ENCODE measurements at regions of chr12 and their contacts with region 1.

Region 1: GRCh38 chr12:49366652-49367380 is 446 bp upstream of the SPATS2 start:
- DNase-seq: peak; percentile 97
- H3K4me3 ChIP-seq: peak overlapping the region; percentile 72 to 88 (median 82)
- H3K27ac ChIP-seq: peak overlapping the region; percentile 92 to 97 (median 96)
- H3K4me1 ChIP-seq: peaks cover 27 to 34% (median 29%) of the 10 kb centered on the region in 4 donors
- H3K27me3 ChIP-seq: no peaks in the 10 kb centered on the region
- CTCF ChIP-seq: peak; percentile 21 to 48 (median 23)
- EP300 ChIP-seq: no peak
- POLR2A ChIP-seq: no peak

Region 2: GRCh38 chr12:48988030-48988649 is 378.7 kb before region 1 on chr12:
- intact Hi-C with region 1: no loop called
- DNase-seq: no peak
- H3K4me3 ChIP-seq: no peak overlapping the region
- H3K27ac ChIP-seq: no peak overlapping the region
- H3K4me1 ChIP-seq: peaks cover 0 to 7% (median 3%) of the 10 kb centered on the region in 4 donors
- H3K27me3 ChIP-seq: peaks cover 0 to 94% (median 8%) of the 10 kb centered on the region in 4 donors
- CTCF ChIP-seq: peak; percentile 73 to 82 (median 76)
- EP300 ChIP-seq: no peak
- POLR2A ChIP-seq: no peak

Region 3: GRCh38 chr12:49515266-49515665 is 148.4 kb after region 1 on chr12:
- intact Hi-C with region 1: no loop called
- DNase-seq: peak; percentile 12
- H3K4me3 ChIP-seq: no peak overlapping the region
- H3K27ac ChIP-seq: no peak overlapping the region
- H3K4me1 ChIP-seq: peaks cover 0 to 5% (median 0%) of the 10 kb centered on the region in 4 donors
- H3K27me3 ChIP-seq: no peaks in the 10 kb centered on the region
- CTCF ChIP-seq: no peak
- EP300 ChIP-seq: no peak
- POLR2A ChIP-seq: no peak

Region 4: DNA sequence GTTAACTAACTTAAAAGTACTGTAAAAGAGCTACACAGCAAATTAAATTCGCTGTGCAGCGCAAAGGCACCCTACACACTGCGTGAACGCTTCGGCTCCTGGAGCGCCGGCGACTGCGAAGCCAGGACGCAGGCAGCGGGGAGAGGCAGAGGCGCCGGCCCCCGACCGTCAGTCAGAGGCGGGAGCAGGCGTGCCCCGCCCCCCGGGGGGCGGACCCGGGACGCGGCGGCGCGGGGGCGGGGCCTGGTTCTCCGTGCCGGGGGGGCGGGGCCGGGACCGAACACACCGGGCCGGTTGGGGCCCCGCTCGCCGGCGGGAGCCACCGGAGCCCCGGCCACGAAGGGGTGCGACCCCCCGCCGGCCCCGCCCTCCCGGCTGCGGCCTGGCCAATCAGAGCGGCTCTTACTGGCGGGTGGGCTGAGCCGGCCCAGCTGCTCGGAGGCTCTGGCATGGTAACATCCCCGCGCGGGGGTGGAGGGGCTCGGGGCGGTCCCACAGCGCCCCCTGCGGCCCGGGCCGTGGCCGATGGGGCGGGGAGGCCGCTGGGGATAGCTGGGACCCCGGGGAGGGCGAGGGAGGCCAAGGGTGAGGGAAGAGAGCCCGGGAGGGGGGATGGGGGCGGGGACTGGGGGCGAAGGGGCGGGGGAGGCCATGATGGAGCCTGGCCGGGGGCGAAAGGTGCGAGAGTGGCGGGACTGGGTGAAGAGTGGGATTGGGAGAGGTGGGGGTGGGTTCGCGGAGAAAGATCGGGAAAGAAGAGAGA is 256.5 kb after region 1 on chr12 and contains the start of gene PRPF40B:
- intact Hi-C with region 1: loop called (anchors 10 kb)
- DNase-seq: no peak
- H3K4me3 ChIP-seq: peak within 1 kb of the TSS; percentile 62 to 77 (median 64)
- H3K27ac ChIP-seq: peak within 1 kb of the TSS; percentile 86 to 92 (median 88)
- H3K4me1 ChIP-seq: peaks cover 14 to 50% (median 38%) of the 10 kb centered on the region in 4 donors
- H3K27me3 ChIP-seq: no peaks in the 10 kb centered on the region
- CTCF ChIP-seq: peak; percentile 47 to 62 (median 57)
- EP300 ChIP-seq: no peak
- POLR2A ChIP-seq: peak; percentile 49
- total RNA-seq, gene PRPF40B: 9.6 to 19.0 (median 13.9) TPM